Astrocyte of the cerebellum (primary cell): ENCODE measurements at regions of chr3 and their contacts with region 1.

Region 1: DNA sequence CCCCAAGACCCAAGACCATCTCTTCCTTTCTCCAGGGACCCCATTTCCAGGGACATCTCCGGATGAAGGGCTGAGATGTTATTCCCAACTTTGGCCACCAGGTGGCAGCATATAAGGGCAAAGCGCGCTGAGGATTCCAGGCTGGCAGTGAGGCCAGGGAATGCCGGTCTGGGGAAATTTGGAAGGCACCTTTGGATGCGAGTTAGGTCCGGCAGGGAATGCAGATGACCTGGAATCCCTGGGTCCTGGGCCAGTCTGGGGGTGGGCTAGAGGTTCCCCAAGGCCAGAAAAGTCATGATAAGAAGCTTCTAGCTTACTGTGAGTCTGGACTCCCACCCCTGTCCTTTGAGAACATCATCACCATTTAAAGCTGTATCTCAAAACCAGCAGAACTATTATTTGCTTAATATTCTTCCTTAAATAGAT is 1.6 kb upstream of the CHST13 start:
- DNase-seq: peak; percentile 11
- H3K4me3 ChIP-seq: no peak overlapping the region
- CTCF ChIP-seq: peak; percentile 88

Region 2: DNA sequence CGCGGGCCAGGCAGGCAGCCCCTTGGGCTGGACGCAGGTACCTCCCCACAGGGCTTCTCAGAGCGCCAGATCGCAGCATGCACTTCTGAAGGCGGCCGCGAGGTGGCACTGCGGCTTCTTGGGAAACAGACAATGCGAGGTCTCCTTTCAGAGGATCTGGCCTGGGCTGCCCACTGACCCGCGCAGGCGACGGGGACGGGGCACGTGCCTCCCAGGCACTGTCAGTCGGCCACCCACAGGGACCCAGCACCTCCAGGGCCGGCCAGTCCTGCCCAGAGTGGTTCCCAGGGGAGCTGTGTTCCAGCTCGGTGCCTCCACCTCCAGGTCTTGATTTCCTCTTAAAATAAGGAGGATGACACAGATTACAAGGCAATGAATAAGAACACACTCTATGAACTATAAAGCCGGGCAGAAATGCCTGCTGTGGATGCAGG is 157.0 kb after region 1 on chr3:
- in situ Hi-C with region 1: loop called (anchors 10 kb)
- DNase-seq: peak; percentile 34
- H3K4me3 ChIP-seq: no peak overlapping the region
- CTCF ChIP-seq: peak; percentile 88

Region 3: DNA sequence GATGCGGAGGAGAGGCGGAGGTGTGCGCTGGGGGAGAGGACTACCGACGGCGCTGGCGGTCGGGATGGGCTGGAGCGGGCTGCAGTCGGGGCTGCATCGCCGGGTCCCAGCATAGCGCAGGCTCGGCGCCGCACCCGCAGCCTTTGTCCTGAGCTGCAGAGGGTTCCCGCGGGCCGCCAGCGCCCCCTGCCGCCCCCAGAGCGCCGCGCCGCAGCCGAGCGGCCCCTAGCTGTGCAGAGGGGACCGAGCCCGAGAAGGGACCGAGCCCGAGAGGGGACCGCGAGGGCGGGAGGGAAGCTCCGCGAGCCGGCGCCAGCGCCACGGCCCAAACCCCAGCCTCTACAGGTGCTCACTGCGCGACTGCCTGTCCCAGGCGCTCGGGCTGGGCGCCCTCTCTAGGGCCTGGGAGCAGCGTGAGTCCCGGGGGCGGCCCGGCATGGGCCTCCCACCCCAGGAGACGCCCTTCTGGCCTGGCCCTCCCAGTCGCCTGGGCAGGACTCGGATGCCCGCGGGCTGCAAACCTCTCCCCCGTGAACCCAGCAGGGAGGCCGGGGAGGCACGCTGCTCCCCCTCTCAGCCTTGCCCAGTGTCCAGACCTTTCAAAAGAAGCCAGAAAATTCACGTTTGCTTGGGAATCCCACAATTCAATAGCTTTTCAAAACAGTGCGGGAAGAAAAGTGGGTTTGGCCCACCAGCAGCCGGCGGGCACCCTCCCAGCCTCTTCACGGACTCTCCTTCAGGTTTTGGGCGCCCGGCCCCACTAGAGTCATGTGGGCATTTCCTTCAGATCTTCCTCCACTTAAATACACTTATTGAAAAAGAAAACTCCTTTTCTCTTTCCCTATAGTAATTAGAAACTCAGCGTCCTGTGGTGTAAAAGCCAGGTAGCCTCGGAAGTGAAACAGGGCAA is 933.4 kb after region 1 on chr3:
- in situ Hi-C with region 1: loop called (anchors 10 kb)
- DNase-seq: no peak
- H3K4me3 ChIP-seq: peak overlapping the region; percentile 27
- CTCF ChIP-seq: peak; percentile 84